ENCODE measurements at regions of chr7 and their contacts with region 1.

Region 1: DNA sequence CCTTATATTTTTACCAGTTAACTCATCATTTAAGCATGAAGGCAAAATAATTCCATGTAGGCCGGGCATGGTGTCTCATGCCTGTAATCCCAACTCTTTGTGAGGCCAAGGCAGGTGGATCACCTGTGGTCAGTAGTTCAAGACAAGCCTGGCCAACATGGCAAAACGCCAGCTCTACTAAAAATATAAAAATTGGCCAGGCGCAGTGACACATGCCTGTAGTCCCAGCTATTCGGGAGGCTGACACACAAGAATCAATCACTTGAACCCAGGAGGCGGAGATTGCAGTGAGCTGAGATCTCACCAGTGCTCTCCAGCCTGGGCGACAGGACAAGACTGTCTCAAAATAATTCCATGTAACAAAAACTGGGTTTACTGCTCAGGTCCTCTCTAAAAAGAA is 18.3 kb downstream of the HNRNPA2B1 start:
- DNase-seq: no peak
- H3K4me3 ChIP-seq: no peak overlapping the region
- H3K27ac ChIP-seq: no peak overlapping the region
- H3K4me1 ChIP-seq: peaks cover 0 to 5% (median 0%) of the 10 kb centered on the region in 4 experiments; a peak in 1 of 7 replicates
- H3K27me3 ChIP-seq: no peaks in the 10 kb centered on the region
- CTCF ChIP-seq: no peak
- EP300 ChIP-seq: no peak
- POLR2A ChIP-seq: no peak
- RAD21 ChIP-seq: no peak

Region 2: GRCh38 chr7:26167301-26167934 is 14.9 kb before region 1 on chr7:
- CTCF ChIA-PET with region 1: no interaction called
- POLR2A ChIA-PET with region 1: interaction called, 16 read pairs
- DNase-seq: no peak
- H3K4me3 ChIP-seq: no peak overlapping the region
- H3K27ac ChIP-seq: no peak overlapping the region
- H3K4me1 ChIP-seq: peaks cover 5 to 16% (median 10%) of the 10 kb centered on the region in 4 experiments; a peak in 6 of 7 replicates
- H3K27me3 ChIP-seq: no peaks in the 10 kb centered on the region
- CTCF ChIP-seq: no peak
- EP300 ChIP-seq: no peak
- POLR2A ChIP-seq: no peak
- RAD21 ChIP-seq: no peak

Region 3: DNA sequence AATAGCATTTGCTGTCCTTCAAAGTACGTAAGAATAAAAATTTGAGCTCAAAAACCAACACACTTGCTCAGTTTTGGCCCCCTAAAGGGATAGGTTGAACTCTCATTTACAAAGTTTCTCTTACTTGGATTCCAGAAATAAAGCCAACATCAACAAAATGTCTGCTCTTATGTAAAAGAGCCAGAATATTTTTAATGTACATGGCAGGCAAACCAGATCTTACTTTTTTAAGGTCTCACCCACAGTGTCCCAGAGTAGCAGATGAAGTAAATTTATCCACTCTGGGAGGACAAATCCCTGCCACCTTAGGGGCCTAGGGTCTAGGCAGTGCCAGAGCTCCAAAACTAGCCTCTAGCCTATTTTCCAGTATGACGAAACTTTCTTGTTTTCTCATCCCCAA is 522.5 kb after region 1 on chr7:
- CTCF ChIA-PET with region 1: no interaction called
- POLR2A ChIA-PET with region 1: no interaction called
- DNase-seq: no peak
- H3K4me3 ChIP-seq: no peak overlapping the region
- H3K27ac ChIP-seq: no peak overlapping the region
- H3K4me1 ChIP-seq: no peaks in the 10 kb centered on the region
- H3K27me3 ChIP-seq: peaks cover 0 to 1% (median 0%) of the 10 kb centered on the region in 4 experiments; a peak in 2 of 7 replicates
- CTCF ChIP-seq: no peak
- EP300 ChIP-seq: no peak
- POLR2A ChIP-seq: no peak
- RAD21 ChIP-seq: no peak